ENCODE measurements at regions of chr5 and their contacts with region 1.

Region 1: DNA sequence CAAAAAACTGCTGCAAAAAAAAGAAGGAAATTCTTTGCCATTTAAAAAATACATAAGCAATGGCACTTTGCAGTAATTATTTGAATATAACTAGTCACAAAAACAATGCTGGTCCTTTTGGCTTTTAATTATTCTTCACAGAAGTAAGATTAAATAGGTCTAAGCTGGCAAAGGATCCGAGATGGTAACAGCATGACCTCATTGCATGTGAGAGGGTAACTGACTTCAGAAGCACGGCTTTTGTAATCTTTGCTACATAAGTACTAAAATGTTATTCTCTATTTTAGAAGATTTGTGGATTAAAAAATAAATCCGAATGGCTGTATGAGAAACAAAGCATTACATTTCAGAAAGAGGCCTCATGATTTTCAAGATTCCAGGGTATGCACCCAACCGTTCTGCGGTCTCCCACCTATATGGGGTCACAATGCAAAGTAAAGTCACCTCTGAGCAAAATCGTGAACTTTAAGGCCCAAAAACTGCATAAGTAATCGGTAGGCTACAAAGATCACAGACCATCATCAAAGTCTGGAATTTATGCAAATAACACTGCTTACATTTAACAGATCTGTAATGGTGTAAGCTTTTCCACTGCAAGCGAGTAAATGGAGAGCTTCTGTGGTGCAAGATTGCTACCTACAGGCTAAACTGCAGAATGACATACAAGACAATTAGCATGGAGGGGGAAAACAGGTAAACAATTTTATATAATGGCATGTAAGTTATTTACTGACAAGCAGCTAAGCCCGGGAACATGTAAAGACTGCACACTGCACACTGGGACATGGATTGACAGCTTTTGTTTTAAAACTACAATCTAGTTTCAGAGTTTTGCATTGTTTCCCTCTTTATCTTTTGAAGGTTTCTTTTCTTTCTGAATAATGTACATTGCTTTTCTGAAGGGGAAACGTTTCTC is 231.6 kb downstream of the SLF1 start:
- DNase-seq: peak; percentile 26
- H3K4me3 ChIP-seq: no peak overlapping the region
- H3K27ac ChIP-seq: no peak overlapping the region
- H3K27me3 ChIP-seq: no peaks in the 10 kb centered on the region
- CTCF ChIP-seq: peak; percentile 76

Region 2: GRCh38 chr5:94702729-94703128 is 147.3 kb before region 1 on chr5:
- CTCF ChIA-PET with region 1: no interaction called
- POLR2A ChIA-PET with region 1: no interaction called
- DNase-seq: no peak
- H3K4me3 ChIP-seq: no peak overlapping the region
- H3K27ac ChIP-seq: no peak overlapping the region
- H3K27me3 ChIP-seq: no peaks in the 10 kb centered on the region
- CTCF ChIP-seq: no peak

Region 3: GRCh38 chr5:94832685-94833084 is 17.4 kb before region 1 on chr5:
- CTCF ChIA-PET with region 1: interaction called, 15 read pairs
- POLR2A ChIA-PET with region 1: no interaction called
- DNase-seq: no peak
- H3K4me3 ChIP-seq: no peak overlapping the region
- H3K27ac ChIP-seq: no peak overlapping the region
- H3K27me3 ChIP-seq: no peaks in the 10 kb centered on the region
- CTCF ChIP-seq: no peak